CD4-positive, alpha-beta memory T cell (primary cell): ENCODE measurements at regions of chr5 and their contacts with region 1.

Region 1: GRCh38 chr5:150778517-150779396 is at the start of gene SMIM3:
- DNase-seq: peak; percentile 59 to 70 (median 65)
- H3K4me3 ChIP-seq: peak within 1 kb of the TSS; percentile 67 to 77
- H3K4me3 Mint-ChIP-seq: peak within 1 kb of the TSS; percentile 97 to 99 (median 98)
- H3K27ac ChIP-seq: peak within 1 kb of the TSS; percentile 60
- H3K27ac Mint-ChIP-seq: peak within 1 kb of the TSS; percentile 93 to 99 (median 96)
- H3K4me1 ChIP-seq: peaks cover 52% of the 10 kb centered on the region
- H3K4me1 Mint-ChIP-seq: peaks cover 36 to 61% (median 52%) of the 10 kb centered on the region in 4 donors
- H3K27me3 ChIP-seq: no peaks in the 10 kb centered on the region
- H3K27me3 Mint-ChIP-seq: no peaks in the 10 kb centered on the region
- total RNA-seq, gene SMIM3: 7.9 to 8.0 TPM

Region 2: DNA sequence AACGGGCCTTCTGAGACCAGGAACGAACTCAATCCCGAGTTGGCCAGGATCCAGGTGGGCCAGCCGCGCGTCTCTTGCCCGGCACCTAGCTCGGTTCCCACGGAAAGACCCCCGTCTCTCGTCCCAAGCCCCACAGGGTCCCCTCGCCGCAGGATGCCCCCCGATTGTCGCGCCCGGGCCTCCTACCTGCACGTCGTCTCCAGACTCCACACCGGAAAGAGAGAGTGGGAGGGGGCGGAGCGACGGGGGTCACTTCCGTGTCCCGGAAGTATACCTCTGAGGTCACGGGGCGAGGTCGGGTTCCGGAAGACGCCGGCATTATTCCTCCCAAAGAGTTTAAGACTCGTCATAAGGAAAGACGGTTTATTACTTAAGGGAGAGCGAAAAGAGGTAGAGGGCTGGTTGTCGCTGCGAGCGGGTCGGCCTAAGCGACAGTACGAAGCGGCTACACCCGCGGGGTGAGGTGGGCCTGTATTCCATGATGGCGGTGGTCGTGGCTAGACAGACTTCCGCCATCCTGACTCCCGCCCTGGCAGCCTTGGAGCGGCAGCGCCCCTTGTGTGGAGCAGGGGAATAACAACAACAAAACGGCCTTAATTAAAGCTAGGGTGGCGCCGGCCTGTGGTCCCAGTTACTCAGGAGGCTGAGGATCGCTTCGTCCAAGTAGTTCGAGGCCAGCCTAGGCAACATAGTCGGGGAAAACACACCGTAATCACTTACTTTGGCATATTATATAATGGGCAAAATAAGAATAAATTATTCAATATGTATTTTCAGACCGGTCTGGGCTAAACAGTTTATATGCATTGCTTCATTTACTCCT is 329.0 kb before region 1 on chr5 and contains the start of gene RPS14:
- CTCF ChIA-PET with region 1: interaction called, 3 read pairs
- POLR2A ChIA-PET with region 1: interaction called, 10 read pairs
- intact Hi-C with region 1: no loop called
- DNase-seq: peak; percentile 96 to 98 (median 97)
- H3K4me3 ChIP-seq: peak within 1 kb of the TSS; percentile 87 to 99
- H3K4me3 Mint-ChIP-seq: peak within 1 kb of the TSS; percentile 92 to 100 (median 98)
- H3K27ac ChIP-seq: peak within 1 kb of the TSS; percentile 99
- H3K27ac Mint-ChIP-seq: peak within 1 kb of the TSS; percentile 99 to 100 (median 100)
- H3K4me1 ChIP-seq: peaks cover 28% of the 10 kb centered on the region
- H3K4me1 Mint-ChIP-seq: peaks cover 15 to 46% (median 36%) of the 10 kb centered on the region in 4 donors
- H3K27me3 ChIP-seq: no peaks in the 10 kb centered on the region
- H3K27me3 Mint-ChIP-seq: no peaks in the 10 kb centered on the region
- total RNA-seq, gene RPS14: 5,260 to 5,575 TPM

Region 3: GRCh38 chr5:150560401-150561193 is 218.2 kb before region 1 on chr5:
- CTCF ChIA-PET with region 1: interaction called, 36 read pairs
- POLR2A ChIA-PET with region 1: interaction called, 5 read pairs
- intact Hi-C with region 1: loop called (anchors 1 kb)
- DNase-seq: peak; percentile 73 to 82 (median 79)
- H3K4me3 ChIP-seq: no peak overlapping the region
- H3K4me3 Mint-ChIP-seq: no peak overlapping the region
- H3K27ac ChIP-seq: no peak overlapping the region
- H3K27ac Mint-ChIP-seq: no peak overlapping the region
- H3K4me1 ChIP-seq: no peaks in the 10 kb centered on the region
- H3K4me1 Mint-ChIP-seq: peaks cover 0 to 1% (median under 1%) of the 10 kb centered on the region in 4 donors
- H3K27me3 ChIP-seq: no peaks in the 10 kb centered on the region
- H3K27me3 Mint-ChIP-seq: peaks cover 0 to 3% of the 10 kb centered on the region in 2 donors

Region 4: GRCh38 chr5:150758531-150759333 is 20.0 kb before region 1 on chr5 and contains the start of gene DCTN4:
- CTCF ChIA-PET with region 1: interaction called, 87 read pairs
- POLR2A ChIA-PET with region 1: interaction called, 50 read pairs
- intact Hi-C with region 1: loop called (anchors 1 kb)
- DNase-seq: peak; percentile 94 to 97 (median 96)
- H3K4me3 ChIP-seq: peak within 1 kb of the TSS; percentile 78 to 88
- H3K4me3 Mint-ChIP-seq: peak within 1 kb of the TSS in 1 of 8 donors; percentile 7
- H3K27ac ChIP-seq: peak within 1 kb of the TSS; percentile 94
- H3K27ac Mint-ChIP-seq: no peak within 1 kb of the TSS
- H3K4me1 ChIP-seq: peaks cover 29% of the 10 kb centered on the region
- H3K4me1 Mint-ChIP-seq: peaks cover 24 to 36% (median 32%) of the 10 kb centered on the region in 4 donors
- H3K27me3 ChIP-seq: no peaks in the 10 kb centered on the region
- H3K27me3 Mint-ChIP-seq: no peaks in the 10 kb centered on the region
- total RNA-seq, gene DCTN4: 45.5 to 46.0 TPM

Region 5: DNA sequence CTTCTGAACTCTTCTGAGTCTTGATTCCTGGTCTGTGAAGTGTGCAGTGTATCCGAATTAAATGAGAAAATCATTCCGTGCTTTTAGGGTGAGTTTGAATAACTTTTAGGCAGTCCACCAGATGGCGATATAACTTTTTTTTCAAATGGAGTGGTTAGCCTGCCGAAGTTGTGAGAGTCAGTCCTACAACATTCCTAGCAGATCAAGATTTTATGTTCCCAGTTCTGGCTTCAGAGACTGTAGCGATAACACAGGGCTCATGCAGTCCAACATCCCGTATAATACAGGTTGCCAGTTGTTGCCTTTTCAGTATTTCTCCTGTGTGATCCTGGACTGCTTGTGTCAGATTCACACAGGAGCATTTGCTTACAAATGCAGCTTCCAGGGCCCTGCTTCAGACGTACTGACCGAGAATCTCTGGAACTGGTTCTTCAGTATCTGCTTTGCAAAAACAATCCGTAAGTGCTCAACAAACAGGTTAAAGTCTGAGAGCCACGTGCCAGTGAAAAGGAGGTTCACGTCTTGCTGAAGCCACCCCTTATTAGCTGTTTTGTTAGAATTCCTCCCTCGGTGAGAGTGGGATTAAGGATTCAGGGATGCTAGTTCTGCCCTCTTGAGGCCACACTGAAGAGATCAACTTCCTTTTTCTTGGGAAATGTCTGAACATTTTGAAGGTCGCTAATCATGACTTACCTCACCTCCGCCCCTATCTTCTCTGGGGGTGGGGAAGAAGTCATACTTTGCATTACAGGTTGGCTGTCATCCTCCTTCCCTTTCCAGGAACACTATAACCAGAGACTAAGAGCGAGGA is 22.6 kb after region 1 on chr5:
- CTCF ChIA-PET with region 1: interaction called, 10 read pairs
- POLR2A ChIA-PET with region 1: interaction called, 7 read pairs
- intact Hi-C with region 1: no loop called
- DNase-seq: peak in 4 of 5 donors; percentile 42 to 50 (median 44)
- H3K4me3 ChIP-seq: no peak overlapping the region
- H3K4me3 Mint-ChIP-seq: no peak overlapping the region
- H3K27ac ChIP-seq: no peak overlapping the region
- H3K27ac Mint-ChIP-seq: peak overlapping the region in 2 of 7 donors; percentile 37 to 55
- H3K4me1 ChIP-seq: peaks cover 8% of the 10 kb centered on the region
- H3K4me1 Mint-ChIP-seq: peaks cover 3 to 5% (median 5%) of the 10 kb centered on the region in 4 donors
- H3K27me3 ChIP-seq: no peaks in the 10 kb centered on the region
- H3K27me3 Mint-ChIP-seq: peaks cover 3 to 6% of the 10 kb centered on the region in 2 donors